Psoas muscle (tissue), 8 donors: ENCODE measurements at regions of chr4 and their contacts with region 1.

Region 1: DNA sequence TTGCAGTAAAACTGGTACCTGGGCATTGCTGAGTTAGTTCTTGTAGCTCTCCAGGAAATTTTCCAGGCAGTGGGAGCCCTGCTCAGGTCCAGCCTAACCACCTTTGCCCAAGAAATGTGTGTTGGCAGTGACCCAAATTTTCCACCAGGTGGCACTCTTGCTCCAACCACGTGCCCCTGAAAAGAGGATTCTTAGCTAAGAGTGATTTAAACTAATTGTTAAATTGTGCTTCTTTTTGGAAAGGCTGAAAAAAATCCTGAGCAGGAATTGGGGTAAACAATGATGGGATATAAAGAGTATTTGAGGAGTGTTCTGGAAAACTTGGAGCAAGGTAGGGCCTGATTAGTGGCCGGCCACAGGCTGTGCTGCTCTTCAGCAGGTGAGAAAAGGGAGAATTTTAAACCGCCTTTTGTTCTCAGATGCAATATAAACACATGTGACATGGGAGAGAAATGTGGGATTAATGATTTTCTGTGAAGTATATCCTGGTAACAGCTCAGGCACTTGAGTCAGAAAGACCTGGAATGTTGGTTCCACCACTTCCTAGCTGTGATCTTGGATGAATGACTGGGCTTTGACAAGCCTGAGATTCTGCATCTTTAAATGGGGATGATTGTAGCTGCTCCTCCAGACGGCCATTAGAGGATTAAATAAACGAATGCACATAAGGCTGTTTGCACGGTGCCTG is 219.6 kb downstream of the PTTG2 start:
- DNase-seq: peak in 1 of 2 donors; percentile 72
- ATAC-seq: peak; percentile 72 to 83 (median 77)
- H3K4me3 ChIP-seq: no peak overlapping the region
- H3K27ac ChIP-seq: no peak overlapping the region
- H3K4me1 ChIP-seq: peaks cover 14% of the 10 kb centered on the region
- H3K27me3 ChIP-seq: no peaks in the 10 kb centered on the region
- CTCF ChIP-seq: peak; percentile 95

Region 2: GRCh38 chr4:37338983-37339382 is 840.9 kb before region 1 on chr4:
- intact Hi-C with region 1: no loop called
- DNase-seq: no peak
- ATAC-seq: no peak
- H3K4me3 ChIP-seq: no peak overlapping the region
- H3K27ac ChIP-seq: no peak overlapping the region
- H3K4me1 ChIP-seq: no peaks in the 10 kb centered on the region
- H3K27me3 ChIP-seq: no peaks in the 10 kb centered on the region
- CTCF ChIP-seq: no peak

Region 3: DNA sequence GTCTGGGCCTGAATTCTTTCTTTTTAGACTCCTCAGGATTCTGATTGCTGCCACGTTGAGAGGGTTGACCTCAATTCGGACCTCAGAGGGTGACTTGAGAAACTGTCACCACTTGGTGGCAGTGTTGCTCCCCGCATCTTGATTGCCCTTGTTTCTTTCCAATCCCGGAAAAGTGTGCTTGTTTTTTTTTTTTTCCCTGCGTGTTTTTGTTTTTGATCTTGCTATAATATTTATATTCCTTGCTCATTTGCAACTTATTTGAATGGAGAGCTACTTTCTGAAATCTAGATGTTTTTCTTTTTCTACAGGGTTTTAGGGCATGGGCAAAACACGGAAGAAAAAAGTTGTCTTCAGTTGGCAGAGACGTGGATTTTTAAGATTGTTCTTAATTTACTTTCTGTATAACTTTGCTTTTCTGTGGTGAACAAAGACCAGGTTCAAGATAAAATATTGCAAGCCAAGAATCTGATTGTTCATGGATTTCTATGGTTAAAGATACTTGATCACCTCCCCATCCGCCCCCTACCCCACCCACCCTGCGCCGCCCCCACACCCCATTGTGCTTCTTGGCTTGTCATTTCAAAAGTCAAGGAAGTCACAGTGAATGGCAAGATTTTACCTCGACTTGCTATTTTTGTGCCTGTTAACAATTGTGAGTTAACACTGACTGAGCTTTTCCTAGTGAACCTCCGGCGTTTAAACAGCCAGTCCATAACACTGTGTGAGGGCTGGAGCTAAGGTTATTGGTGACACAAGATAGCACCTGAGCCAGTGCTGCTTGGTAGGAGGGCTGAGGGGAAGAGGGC is 117.5 kb before region 1 on chr4:
- intact Hi-C with region 1: loop called (anchors 5 to 10 kb)
- DNase-seq: peak; percentile 76 to 79
- ATAC-seq: peak; percentile 70 to 90 (median 80)
- H3K4me3 ChIP-seq: peak overlapping the region; percentile 39
- H3K27ac ChIP-seq: no peak overlapping the region
- H3K4me1 ChIP-seq: no peaks in the 10 kb centered on the region
- H3K27me3 ChIP-seq: no peaks in the 10 kb centered on the region
- CTCF ChIP-seq: peak; percentile 86

Region 4: DNA sequence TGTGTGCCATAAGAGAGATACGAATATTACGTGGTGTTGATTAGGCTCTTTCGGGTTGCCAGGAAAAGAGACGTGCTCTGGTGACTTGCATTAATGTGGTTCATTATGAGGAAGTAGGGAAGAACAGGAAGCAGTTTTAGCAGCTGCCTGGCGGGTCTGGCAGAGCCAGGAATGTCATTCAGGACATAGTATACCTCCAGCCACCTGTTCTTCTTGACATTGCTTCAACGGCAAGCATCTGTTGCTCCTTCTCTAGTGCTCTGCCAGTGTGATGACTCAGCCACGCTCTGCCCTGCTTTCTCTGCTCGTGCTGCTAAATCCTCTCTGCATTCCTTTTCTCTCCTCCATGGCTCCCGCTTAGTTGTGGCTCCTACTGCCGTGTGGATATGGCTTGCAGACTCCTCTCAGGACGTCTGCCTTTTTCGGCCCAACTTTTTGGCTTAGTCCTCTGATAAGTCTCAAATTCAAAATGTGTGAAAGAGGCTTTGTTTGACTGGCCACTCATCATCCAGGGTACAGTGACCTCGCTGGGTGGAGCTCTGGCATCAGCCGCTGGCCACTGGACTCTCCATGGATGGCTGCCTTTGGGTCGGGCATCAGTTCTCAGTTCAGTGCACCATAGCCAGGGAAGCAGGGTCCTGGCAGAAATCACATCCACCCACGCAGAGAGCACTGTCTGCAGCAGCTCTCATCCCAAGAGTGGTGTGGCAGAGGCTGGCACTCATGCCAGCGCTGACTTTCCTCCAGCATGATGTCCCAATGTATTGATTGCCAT is 394.9 kb after region 1 on chr4:
- intact Hi-C with region 1: loop called in 1 of 2 experiments (anchors 10 kb)
- DNase-seq: peak; percentile 63 to 79
- ATAC-seq: peak; percentile 97 to 98 (median 98)
- H3K4me3 ChIP-seq: peak overlapping the region; percentile 17
- H3K27ac ChIP-seq: peak overlapping the region; percentile 87
- H3K4me1 ChIP-seq: peaks cover 12% of the 10 kb centered on the region
- H3K27me3 ChIP-seq: no peaks in the 10 kb centered on the region
- CTCF ChIP-seq: no peak

Region 5: DNA sequence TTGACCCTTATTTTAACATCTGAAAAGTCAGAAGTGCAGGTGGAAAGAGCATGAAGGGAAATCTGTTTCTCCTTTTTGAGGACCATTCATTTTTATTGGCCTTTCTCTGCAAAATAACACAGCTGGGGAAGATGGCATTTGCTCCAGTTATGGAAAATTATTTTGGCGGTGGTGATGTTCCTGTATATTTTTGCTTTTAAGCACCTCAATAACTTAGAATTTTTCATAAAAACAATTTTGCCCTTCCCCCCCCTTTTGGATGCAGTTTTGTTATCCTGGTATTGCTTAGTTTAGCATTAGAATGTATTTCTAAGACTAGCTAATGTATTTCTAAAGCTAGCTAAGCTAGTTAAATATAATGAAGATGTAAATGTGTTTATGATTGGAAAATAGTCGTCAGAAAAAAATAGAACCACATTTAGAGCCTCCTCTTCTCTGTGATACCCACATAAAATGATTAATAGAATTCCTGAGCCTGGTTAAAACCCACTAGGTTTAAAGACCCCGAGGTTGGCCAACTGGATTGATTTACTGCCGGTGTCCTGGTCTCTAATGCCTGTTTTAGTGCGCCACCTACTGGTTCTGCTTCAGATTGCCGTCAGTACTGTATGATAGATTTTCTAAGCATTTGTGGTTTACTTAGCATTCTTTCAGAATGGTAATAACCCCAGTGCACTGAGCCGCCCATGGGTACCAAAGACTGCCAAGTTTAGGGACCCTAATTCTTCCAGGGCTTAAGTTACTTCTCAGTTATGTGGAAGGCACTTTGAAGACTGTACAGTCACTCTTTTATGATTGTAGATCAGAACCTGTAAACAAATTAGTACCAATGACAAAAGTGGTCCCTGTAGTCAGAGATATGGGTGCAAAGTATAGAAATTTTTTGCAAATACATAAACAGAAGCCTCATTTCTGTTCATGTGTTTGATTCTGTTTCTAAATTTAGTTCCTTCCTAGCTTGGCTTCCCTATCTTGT is 495.6 kb after region 1 on chr4:
- intact Hi-C with region 1: loop called (anchors 2 kb)
- DNase-seq: peak; percentile 62 to 67
- ATAC-seq: peak; percentile 65 to 85 (median 72)
- H3K4me3 ChIP-seq: peak overlapping the region; percentile 29
- H3K27ac ChIP-seq: peak overlapping the region; percentile 54
- H3K4me1 ChIP-seq: peaks cover 87% of the 10 kb centered on the region
- H3K27me3 ChIP-seq: no peaks in the 10 kb centered on the region
- CTCF ChIP-seq: peak; percentile 96

Region 6: GRCh38 chr4:38730830-38731646 is 551.2 kb after region 1 on chr4:
- intact Hi-C with region 1: loop called (anchors 1 to 5 kb)
- DNase-seq: peak; percentile 80 to 87
- ATAC-seq: peak; percentile 77 to 87 (median 83)
- H3K4me3 ChIP-seq: no peak overlapping the region
- H3K27ac ChIP-seq: no peak overlapping the region
- H3K4me1 ChIP-seq: no peaks in the 10 kb centered on the region
- H3K27me3 ChIP-seq: no peaks in the 10 kb centered on the region
- CTCF ChIP-seq: peak; percentile 96